ENCODE measurements at regions of chr5 and their contacts with region 1.

Region 1: GRCh38 chr5:33936004-33936380 is 194 bp upstream of the RXFP3 start:
- DNase-seq: peak; percentile 74
- CTCF ChIP-seq: peak; percentile 9

Region 2: GRCh38 chr5:33223563-33224284 is 712.3 kb before region 1 on chr5:
- CTCF ChIA-PET with region 1: no interaction called
- POLR2A ChIA-PET with region 1: no interaction called
- DNase-seq: no peak
- CTCF ChIP-seq: no peak

Region 3: GRCh38 chr5:33440482-33441240 is 495.3 kb before region 1 on chr5 and contains the start of gene TARS1:
- CTCF ChIA-PET with region 1: interaction called, 20 read pairs
- POLR2A ChIA-PET with region 1: no interaction called
- DNase-seq: peak; percentile 96
- CTCF ChIP-seq: no peak

Region 4: GRCh38 chr5:33588654-33589372 is 347.2 kb before region 1 on chr5:
- CTCF ChIA-PET with region 1: interaction called, 20 read pairs
- POLR2A ChIA-PET with region 1: no interaction called
- DNase-seq: peak; percentile 24
- CTCF ChIP-seq: peak; percentile 29

Region 5: GRCh38 chr5:33886283-33886682 is 49.7 kb before region 1 on chr5:
- CTCF ChIA-PET with region 1: interaction called, 11 read pairs
- POLR2A ChIA-PET with region 1: no interaction called
- DNase-seq: no peak
- CTCF ChIP-seq: no peak

Region 6: GRCh38 chr5:33925278-33925677 is 10.7 kb before region 1 on chr5:
- CTCF ChIA-PET with region 1: interaction called, 68 read pairs
- POLR2A ChIA-PET with region 1: no interaction called
- DNase-seq: no peak
- CTCF ChIP-seq: no peak

Region 7: GRCh38 chr5:33964132-33964700 is 28.2 kb after region 1 on chr5:
- CTCF ChIA-PET with region 1: interaction called, 14 read pairs
- POLR2A ChIA-PET with region 1: no interaction called
- DNase-seq: no peak
- CTCF ChIP-seq: no peak

Measured in GM10248 (cell line).